Dorsolateral prefrontal cortex (tissue), 120 donors: ENCODE measurements at regions of chr3 and their contacts with region 1.

Region 1: DNA sequence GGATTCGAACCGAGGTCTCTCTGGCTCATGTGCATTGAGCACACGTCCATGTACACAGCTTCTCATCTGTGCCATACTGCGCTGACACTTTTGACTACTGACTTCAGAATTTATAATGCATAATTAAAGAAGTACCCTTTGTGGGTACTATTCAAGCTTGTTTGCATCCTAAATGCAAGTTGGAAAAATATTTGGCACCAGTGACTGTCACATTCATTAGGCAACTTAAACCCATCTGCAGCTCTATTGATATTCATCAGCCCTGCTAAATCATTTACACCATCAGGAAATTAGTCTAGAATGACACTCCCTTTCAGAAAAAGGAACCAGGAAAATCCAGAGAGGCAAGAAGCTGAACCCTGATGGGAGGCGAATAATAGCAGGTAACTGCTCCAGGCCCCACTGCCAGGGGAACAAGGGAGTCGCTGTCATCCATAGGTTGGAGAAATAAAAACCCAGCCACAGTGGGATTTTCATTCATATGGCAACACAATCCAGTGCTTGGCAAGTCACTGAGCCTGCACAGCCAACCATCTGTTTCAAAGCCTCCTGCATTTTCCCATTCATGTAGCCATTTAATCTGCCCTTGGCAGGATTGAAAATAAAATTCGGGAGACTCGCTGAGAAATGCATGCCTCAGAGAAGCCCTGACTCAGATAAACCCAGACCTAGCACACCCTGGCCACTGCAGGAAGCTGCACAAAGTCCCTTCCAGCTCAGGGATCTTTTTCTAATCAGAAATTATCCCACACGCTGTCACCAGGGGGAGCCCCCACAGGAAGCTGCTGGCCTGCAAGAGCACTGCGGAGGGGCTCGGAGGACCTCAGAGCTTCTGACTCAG is 103.0 kb upstream of the VEPH1 start:
- DNase-seq: peak in 9 of 10 donors; percentile 35 to 67 (median 58)
- H3K4me3 ChIP-seq: peak overlapping the region in 6 of 59 donors; percentile 7 to 28 (median 12)
- H3K27ac ChIP-seq: peak overlapping the region in 3 of 59 donors; percentile 3 to 18 (median 14)
- H3K27me3 ChIP-seq: no peaks in the 10 kb centered on the region
- CTCF ChIP-seq: peak; percentile 29 to 85 (median 70)

Region 2: DNA sequence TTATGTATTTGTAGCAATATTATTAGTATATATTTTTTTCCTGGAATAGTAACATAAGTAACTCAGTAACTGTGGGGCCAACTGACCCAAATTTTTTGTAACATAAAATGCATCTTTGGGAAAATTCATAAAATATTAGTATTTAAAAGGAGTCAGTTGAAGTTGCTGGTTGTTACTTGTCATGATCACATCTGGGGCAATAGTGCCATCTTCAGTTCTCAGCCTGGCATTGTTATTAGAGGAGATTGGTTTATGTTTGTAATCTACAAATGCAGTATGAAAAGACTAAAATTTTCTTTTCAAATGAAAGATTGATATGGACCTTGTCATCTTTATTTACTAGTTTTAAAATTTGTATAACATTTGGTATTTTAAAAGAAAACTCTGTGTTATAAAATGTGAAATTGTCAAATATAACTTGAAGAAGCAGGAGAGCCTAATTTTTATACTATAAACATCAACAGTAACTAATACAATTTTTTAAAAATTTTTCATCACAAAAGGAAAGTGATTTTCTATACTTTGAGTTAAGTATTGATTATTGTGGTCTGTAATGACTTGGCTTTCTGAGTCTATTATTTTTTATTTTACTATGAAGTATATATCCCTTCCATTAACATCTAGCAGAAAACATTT is 926.0 kb after region 1 on chr3:
- intact Hi-C with region 1: loop called (anchors 5 to 10 kb)
- DNase-seq: no peak
- H3K4me3 ChIP-seq: no peak overlapping the region
- H3K27ac ChIP-seq: no peak overlapping the region
- H3K27me3 ChIP-seq: no peaks in the 10 kb centered on the region
- CTCF ChIP-seq: peak in 53 of 56 donors; percentile 21 to 75 (median 50)